ENCODE measurements at regions of chr6 and their contacts with region 1.

Region 1: GRCh38 chr6:137873273-137873762 is 6.3 kb downstream of the TNFAIP3 start:
- DNase-seq: peak; percentile 56
- H3K4me3 Mint-ChIP-seq: peak overlapping the region; percentile 87
- H3K27ac Mint-ChIP-seq: peak overlapping the region; percentile 86
- H3K4me1 Mint-ChIP-seq: peaks cover 80% of the 10 kb centered on the region
- H3K27me3 Mint-ChIP-seq: no peaks in the 10 kb centered on the region

Region 2: GRCh38 chr6:137707590-137708360 is 165.5 kb before region 1 on chr6:
- CTCF ChIA-PET with region 1: interaction called, 53 read pairs
- POLR2A ChIA-PET with region 1: interaction called, 45 read pairs
- DNase-seq: peak; percentile 91
- H3K4me3 Mint-ChIP-seq: peak overlapping the region; percentile 59
- H3K27ac Mint-ChIP-seq: peak overlapping the region; percentile 86
- H3K4me1 Mint-ChIP-seq: peaks cover 71% of the 10 kb centered on the region
- H3K27me3 Mint-ChIP-seq: no peaks in the 10 kb centered on the region

Region 3: DNA sequence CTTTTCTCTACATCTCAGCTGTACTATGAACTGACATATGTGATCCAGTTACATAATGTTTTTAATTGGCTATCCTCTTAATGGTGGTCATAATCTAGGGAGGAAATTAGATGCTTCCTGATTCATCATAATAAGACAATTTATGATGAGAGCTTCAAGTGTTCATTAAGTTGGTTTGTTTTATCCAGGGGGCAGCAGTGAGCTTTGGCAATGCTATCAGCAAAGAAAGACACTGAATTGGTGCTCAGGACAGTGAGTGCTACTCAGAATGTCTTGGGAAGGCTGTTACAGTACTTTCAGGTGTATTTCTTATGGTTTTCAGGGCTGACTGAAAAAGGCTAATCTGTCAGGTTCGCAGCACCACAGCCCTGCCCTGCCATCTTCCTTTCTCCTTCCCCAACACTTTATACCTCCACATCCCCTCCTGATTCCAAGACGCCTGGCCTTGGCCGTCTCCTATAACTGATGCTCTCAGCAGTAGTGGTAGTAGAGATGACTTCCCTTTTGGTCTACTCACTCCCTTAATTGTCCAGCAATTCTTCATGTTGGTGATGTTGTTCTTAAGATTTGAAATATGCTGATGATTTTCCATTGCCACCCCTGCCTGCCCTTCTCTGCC is 73.3 kb before region 1 on chr6:
- CTCF ChIA-PET with region 1: interaction called, 28 read pairs
- POLR2A ChIA-PET with region 1: interaction called, 13 read pairs
- DNase-seq: peak; percentile 62
- H3K4me3 Mint-ChIP-seq: no peak overlapping the region
- H3K27ac Mint-ChIP-seq: peak overlapping the region; percentile 13
- H3K4me1 Mint-ChIP-seq: peaks cover 45% of the 10 kb centered on the region
- H3K27me3 Mint-ChIP-seq: no peaks in the 10 kb centered on the region

Region 4: GRCh38 chr6:137927777-137928218 is 54.5 kb after region 1 on chr6:
- CTCF ChIA-PET with region 1: interaction called, 11 read pairs
- POLR2A ChIA-PET with region 1: interaction called, 28 read pairs
- DNase-seq: peak; percentile 80
- H3K4me3 Mint-ChIP-seq: peak overlapping the region; percentile 2
- H3K27ac Mint-ChIP-seq: peak overlapping the region; percentile 67
- H3K4me1 Mint-ChIP-seq: peaks cover 33% of the 10 kb centered on the region
- H3K27me3 Mint-ChIP-seq: no peaks in the 10 kb centered on the region

Measured in activated CD4-positive, alpha-beta memory T cell treated with anti-CD3 and anti-CD28 coated beads, Interleukin-2, amount 10 ng/mL, durations not matched to agents 7 days and 5 days (primary cell).